Motor neuron (in vitro differentiated cells): ENCODE measurements at regions of chr1 and their contacts with region 1.

Region 1: DNA sequence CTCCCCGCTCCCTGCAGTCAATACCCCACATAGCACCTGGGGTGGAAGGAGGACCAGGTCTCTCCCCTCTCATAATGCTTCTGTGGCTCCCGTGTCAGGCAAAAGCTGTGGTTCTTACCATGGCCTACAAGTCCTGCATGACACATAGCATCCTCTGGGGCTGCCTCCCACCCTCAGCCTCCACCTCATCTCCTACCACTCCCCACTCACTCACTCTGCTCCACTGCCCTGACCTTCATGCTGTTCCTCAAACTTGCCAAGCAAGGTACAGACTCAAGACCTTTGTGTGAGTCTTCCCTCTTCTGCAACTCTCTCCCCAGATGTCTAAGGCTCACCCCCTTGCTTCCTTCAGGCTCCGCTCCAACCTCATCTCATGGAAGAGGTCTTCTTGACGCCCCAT is 28.0 kb upstream of the VANGL1 start:
- ATAC-seq: no peak
- H3K4me3 ChIP-seq: no peak overlapping the region
- H3K27ac ChIP-seq: no peak overlapping the region
- H3K4me1 ChIP-seq: peaks cover 0 to 3% of the 10 kb centered on the region in 2 donors

Region 2: DNA sequence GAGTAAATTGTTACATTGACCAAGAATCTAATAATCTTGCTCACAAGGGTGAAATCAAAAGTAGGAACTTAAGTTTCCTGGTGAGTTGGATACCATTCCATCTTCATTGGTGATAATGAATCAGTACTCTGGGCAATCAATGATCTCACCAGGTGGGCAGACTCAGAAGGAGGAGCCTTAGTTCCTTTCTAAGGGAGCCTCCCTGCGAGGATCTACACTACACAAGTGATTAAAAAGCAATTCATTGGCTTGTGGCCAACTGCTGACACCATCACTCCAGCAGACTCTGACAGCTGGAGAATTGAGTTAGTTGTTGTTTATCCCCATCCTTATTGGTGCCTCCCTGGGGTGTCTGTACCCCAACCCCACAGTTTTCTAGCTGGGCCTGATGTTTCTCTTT is 56.1 kb before region 1 on chr1:
- in situ Hi-C with region 1: no loop called
- ATAC-seq: peak in 6 of 8 experiments; percentile 23 to 65 (median 50)
- H3K4me3 ChIP-seq: no peak overlapping the region
- H3K27ac ChIP-seq: no peak overlapping the region
- H3K4me1 ChIP-seq: peaks cover 0 to 6% of the 10 kb centered on the region in 2 donors

Region 3: GRCh38 chr1:115677182-115677555 is 63.4 kb after region 1 on chr1:
- in situ Hi-C with region 1: no loop called
- ATAC-seq: peak in 5 of 8 experiments; percentile 76 to 83 (median 79)
- H3K4me3 ChIP-seq: no peak overlapping the region
- H3K27ac ChIP-seq: peak overlapping the region; percentile 13 to 31
- H3K4me1 ChIP-seq: peaks cover 26 to 32% of the 10 kb centered on the region in 2 donors

Region 4: DNA sequence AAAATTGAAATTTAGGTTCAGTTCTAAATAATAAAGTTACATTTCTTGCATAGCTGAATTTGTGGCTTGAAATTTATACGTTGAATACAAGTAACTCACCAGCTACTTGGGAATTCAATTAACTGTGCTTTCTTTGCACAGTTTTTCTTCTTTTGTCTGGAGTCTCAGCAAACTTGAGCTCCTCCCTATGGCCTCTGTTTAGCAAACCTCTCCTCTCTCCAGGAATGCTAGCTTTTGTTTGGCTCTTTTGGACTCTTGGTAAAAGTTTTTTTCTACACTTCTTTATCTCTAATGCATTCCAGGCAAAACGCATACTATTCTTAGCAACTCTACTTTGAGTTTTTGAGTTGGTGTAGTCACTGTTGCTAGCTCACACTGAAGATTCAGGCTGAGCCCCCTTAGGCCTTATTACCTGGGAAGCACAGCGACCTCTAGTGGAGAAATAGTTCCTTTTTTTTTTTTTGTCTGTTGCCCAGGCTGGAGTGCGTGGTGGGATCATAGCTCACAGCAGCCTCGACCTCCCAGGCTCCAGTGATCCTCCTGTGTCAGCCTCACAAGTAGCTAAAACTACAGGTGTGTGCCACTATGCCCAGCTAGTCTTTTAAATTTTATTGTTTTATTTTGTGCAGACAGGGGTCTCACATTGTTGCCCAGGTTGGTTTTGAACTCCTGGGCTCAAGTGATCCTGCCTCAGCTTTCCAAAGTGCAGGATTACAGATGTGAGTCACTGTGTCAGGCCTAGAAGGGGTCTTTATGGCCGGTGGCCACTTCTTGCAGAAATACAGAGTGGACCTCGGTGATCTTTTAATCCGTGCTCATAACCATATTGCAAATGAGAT is 93.0 kb after region 1 on chr1:
- in situ Hi-C with region 1: loop called in 2 of 9 experiments (anchors 10 to 25 kb)
- ATAC-seq: peak; percentile 24 to 83 (median 62)
- H3K4me3 ChIP-seq: no peak overlapping the region
- H3K27ac ChIP-seq: no peak overlapping the region
- H3K4me1 ChIP-seq: peaks cover 9 to 16% of the 10 kb centered on the region in 2 donors

Region 5: DNA sequence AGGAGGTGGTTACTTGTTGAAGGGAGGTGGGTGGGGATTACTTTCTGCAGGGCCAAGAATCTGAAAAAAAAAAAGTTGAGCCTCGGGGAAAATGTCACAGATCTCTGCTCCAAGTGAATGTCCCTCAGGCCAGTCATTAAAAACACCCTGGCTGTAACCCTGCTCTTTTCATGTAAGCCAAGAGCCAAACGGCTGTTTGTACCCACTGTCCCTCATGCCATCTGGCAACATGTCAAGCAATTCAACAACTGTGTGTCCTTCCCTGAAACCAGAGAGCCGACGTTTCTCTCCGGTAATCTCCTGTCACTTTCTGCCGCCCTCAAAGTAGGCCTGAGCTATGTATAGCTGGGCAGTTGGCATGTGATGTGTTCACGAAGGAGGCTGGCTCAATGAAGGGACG is 140.1 kb after region 1 on chr1:
- in situ Hi-C with region 1: loop called in 1 of 9 experiments (anchors 10 kb)
- ATAC-seq: peak in 1 of 8 experiments; percentile 25
- H3K4me3 ChIP-seq: no peak overlapping the region
- H3K27ac ChIP-seq: no peak overlapping the region
- H3K4me1 ChIP-seq: no peaks in the 10 kb centered on the region